PC-3 (cell line): ENCODE measurements at regions of chr2 and their contacts with region 1.

Region 1: GRCh38 chr2:36528274-36528673 is 69.7 kb downstream of the FEZ2 start:
- DNase-seq: no peak
- ATAC-seq: no peak
- H3K4me3 ChIP-seq: no peak overlapping the region
- H3K27ac ChIP-seq: no peak overlapping the region
- H3K4me1 ChIP-seq: no peaks in the 10 kb centered on the region
- H3K27me3 ChIP-seq: no peaks in the 10 kb centered on the region
- CTCF ChIP-seq: no peak

Region 2: GRCh38 chr2:36300697-36301096 is 227.6 kb before region 1 on chr2:
- CTCF ChIA-PET with region 1: no interaction called
- POLR2A ChIA-PET with region 1: interaction called, 20 read pairs
- intact Hi-C with region 1: no loop called
- DNase-seq: no peak
- ATAC-seq: no peak
- H3K4me3 ChIP-seq: no peak overlapping the region
- H3K27ac ChIP-seq: no peak overlapping the region
- H3K4me1 ChIP-seq: no peaks in the 10 kb centered on the region
- H3K27me3 ChIP-seq: peaks cover 6% of the 10 kb centered on the region; the same call in 1 of the 2 replicates
- CTCF ChIP-seq: no peak

Region 3: DNA sequence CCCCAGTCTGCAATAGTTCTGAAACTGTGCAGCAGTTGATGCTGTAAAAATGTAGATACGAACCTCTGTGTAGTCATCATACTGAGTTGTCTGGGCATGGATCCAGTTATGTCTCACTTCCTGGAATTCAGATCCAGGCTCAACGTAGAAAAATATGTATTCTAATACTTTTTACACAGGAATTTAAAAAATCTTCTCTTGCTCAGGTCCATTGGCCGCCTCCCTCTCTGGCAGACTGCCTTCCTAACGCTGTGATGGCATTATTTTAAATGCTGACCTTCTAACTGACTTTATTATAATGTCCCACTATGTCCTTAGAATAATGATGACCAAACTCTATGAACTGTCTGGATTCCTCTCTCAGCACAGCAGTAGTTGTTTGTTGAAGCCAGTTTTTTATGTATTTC is 49.9 kb before region 1 on chr2:
- CTCF ChIA-PET with region 1: no interaction called
- POLR2A ChIA-PET with region 1: no interaction called
- intact Hi-C with region 1: no loop called
- DNase-seq: peak; percentile 96
- ATAC-seq: peak; percentile 83
- H3K4me3 ChIP-seq: no peak overlapping the region
- H3K27ac ChIP-seq: peak overlapping the region; percentile 68
- H3K4me1 ChIP-seq: peaks cover 46% of the 10 kb centered on the region
- H3K27me3 ChIP-seq: no peaks in the 10 kb centered on the region
- CTCF ChIP-seq: no peak